Activated naive CD4-positive, alpha-beta T cell treated with anti-CD3 and anti-CD28 coated beads, Interleukin-2, amount 10 ng/mL, durations not matched to agents 7 days and 5 days (primary cell): ENCODE measurements at regions of chr19 and their contacts with region 1.

Region 1: GRCh38 chr19:31356587-31357314 is 7.5 kb upstream of the TSHZ3 start:
- DNase-seq: peak; percentile 58
- H3K4me3 Mint-ChIP-seq: no peak overlapping the region
- H3K27ac Mint-ChIP-seq: no peak overlapping the region
- H3K4me1 Mint-ChIP-seq: peaks cover 24% of the 10 kb centered on the region
- H3K27me3 Mint-ChIP-seq: peaks cover 89% of the 10 kb centered on the region

Region 2: GRCh38 chr19:31054430-31054829 is 302.3 kb before region 1 on chr19:
- CTCF ChIA-PET with region 1: interaction called, 13 read pairs
- DNase-seq: peak; percentile 47
- H3K4me3 Mint-ChIP-seq: no peak overlapping the region
- H3K27ac Mint-ChIP-seq: no peak overlapping the region
- H3K4me1 Mint-ChIP-seq: no peaks in the 10 kb centered on the region
- H3K27me3 Mint-ChIP-seq: peaks cover 12% of the 10 kb centered on the region

Region 3: DNA sequence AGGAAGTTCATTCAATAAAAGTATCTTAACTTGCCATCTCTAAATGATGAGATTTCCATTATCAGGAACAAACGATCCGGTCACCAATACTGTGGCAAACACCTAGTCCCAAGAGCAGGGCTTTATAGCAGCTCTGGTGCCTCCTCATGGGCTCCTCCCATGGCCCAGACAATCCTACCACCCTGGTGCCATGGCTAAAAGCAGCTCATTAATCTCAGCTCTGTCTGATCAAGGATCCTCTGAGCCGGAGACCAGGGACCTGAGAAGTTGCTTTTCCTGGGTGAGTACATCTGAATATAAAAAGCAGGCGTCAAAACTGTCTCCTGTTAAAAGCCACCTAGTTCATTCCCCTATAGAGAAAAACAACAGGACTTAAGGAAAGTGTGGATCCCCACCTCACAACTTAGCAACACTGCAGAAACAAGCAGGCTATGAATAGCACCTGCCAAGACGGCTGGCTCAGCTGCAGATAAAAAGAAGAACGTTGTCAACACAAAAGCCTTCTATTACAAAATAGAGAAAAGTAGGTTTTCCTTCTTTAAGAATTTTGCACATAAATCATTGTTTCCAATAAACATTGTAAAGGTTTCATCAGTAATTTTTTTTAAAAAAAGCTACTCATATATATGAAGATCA is 37.8 kb before region 1 on chr19:
- CTCF ChIA-PET with region 1: no interaction called
- DNase-seq: no peak
- H3K4me3 Mint-ChIP-seq: no peak overlapping the region
- H3K27ac Mint-ChIP-seq: no peak overlapping the region
- H3K4me1 Mint-ChIP-seq: no peaks in the 10 kb centered on the region
- H3K27me3 Mint-ChIP-seq: peaks cover 8% of the 10 kb centered on the region

Region 4: DNA sequence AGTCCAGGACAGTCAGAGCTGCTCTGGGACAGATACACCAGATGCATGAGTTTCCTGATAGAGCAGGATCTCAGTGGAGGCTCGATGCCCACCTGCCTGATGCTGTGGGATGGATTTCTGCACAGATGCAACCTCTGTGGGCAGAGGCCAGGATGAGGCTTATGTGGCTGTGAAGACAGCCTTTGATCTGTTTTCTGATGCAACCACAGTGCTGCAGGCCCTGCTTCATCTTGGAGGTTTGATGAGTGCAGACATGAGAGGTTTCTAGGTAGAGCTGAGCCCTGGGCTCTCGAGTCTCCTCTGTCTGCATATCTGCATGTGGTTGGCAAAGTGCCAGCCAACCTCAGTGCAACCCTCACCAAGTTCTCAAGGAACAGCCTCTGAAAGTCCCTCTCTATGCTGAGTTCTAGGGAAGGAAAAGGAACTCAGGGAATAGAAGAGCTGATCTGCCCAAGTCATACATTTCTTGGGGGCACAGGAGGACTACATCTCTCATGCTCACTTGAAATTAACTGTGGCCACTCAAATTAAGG is 15.6 kb after region 1 on chr19:
- CTCF ChIA-PET with region 1: no interaction called
- DNase-seq: peak; percentile 28
- H3K4me3 Mint-ChIP-seq: no peak overlapping the region
- H3K27ac Mint-ChIP-seq: no peak overlapping the region
- H3K4me1 Mint-ChIP-seq: peaks cover 12% of the 10 kb centered on the region
- H3K27me3 Mint-ChIP-seq: peaks cover 59% of the 10 kb centered on the region